PC-9 (cell line): ENCODE measurements at regions of chr20 and their contacts with region 1.

Region 1: DNA sequence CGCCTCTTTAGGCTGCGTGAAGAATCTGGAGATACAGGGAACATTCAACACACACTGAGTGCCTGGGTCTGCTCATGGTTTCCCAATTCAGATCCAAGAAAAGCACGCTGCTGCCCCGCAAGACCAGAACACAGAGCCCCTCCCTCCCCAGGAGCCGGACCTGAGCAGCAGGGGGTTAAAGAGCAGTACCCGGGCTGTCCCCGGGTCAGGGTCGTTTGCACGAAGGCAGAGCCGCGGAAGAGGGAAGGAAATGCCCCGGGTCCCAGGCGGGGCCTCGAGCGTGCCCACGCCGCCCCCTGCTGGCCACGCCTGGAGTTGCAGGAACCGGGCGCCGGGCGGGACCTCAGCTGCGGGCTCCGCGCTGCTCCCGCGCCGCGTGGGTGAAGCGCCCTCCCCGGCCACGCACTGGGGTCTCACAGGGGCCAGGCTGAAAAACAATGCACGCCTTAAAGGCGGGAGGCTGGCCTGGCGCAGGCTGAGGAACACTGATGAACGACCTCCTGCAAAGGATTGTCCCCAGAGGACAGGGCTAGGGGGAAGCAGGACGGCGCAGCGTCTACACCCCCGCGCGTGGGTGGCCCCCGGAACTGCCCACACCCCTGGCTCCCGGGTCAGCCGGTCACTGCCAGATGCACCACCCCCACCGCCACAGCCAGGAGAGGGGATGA is 48.9 kb downstream of the ANKRD60 start:
- DNase-seq: peak in 1 of 2 experiments; percentile 73
- H3K4me3 ChIP-seq: peak overlapping the region; percentile 40
- H3K27ac ChIP-seq: no peak overlapping the region
- H3K4me1 ChIP-seq: peaks cover 15% of the 10 kb centered on the region
- H3K27me3 ChIP-seq: no peaks in the 10 kb centered on the region
- CTCF ChIP-seq: peak; percentile 99

Region 2: GRCh38 chr20:57622579-57623377 is 556.8 kb before region 1 on chr20:
- CTCF ChIA-PET with region 1: interaction called, 4 read pairs
- POLR2A ChIA-PET with region 1: no interaction called
- intact Hi-C with region 1: loop called (anchors 1 kb)
- DNase-seq: peak; percentile 83 to 90
- H3K4me3 ChIP-seq: no peak overlapping the region
- H3K27ac ChIP-seq: no peak overlapping the region
- H3K4me1 ChIP-seq: peaks cover 24% of the 10 kb centered on the region
- H3K27me3 ChIP-seq: no peaks in the 10 kb centered on the region
- CTCF ChIP-seq: peak; percentile 99

Region 3: GRCh38 chr20:57797401-57797800 is 382.2 kb before region 1 on chr20:
- CTCF ChIA-PET with region 1: no interaction called
- POLR2A ChIA-PET with region 1: no interaction called
- intact Hi-C with region 1: no loop called
- DNase-seq: no peak
- H3K4me3 ChIP-seq: no peak overlapping the region
- H3K27ac ChIP-seq: no peak overlapping the region
- H3K4me1 ChIP-seq: peaks cover 10% of the 10 kb centered on the region; the same call in 1 of the 2 replicates
- H3K27me3 ChIP-seq: no peaks in the 10 kb centered on the region
- CTCF ChIP-seq: no peak

Region 4: DNA sequence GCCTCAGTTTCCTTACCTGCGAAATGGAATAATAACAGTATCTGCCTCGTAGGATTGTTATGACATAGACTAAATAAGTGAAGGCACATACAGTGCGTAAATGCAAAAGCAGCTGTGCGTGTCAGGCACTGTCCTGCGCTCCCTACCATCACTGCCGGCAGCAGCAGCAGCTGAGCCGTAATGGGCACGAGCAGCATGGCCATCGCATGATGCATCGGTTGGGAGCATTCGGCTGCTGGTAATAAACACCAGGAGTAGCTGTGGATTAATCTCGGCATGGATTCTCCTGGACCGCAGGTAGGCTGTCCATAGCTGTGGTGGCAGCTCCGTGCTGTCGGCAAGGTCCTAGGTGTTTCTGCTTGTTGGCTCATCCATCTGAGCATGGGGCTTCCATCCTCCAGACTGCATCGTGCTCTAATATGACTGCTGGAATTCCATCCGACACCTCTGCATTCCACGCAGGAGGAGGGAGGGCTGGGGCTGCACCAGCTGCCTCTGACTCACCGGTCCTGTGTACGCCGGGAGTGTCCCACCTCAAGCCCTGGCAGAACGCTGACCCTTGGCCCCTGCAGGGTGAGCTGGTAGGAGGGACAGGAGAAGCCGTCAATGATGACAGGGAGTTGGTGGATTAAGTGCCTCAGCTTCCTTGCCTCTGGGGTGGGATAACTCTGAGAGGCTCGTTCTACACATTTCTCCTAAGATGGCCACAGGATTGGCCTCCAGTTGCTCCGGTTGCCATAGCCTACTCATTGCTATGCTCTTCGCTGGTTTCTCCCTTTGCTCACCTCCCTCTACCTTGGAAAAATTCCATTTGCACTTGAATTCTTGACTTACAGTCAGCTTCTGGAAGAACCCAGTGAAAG is 368.8 kb before region 1 on chr20:
- CTCF ChIA-PET with region 1: interaction called, 3 read pairs
- POLR2A ChIA-PET with region 1: no interaction called
- intact Hi-C with region 1: loop called (anchors 10 kb)
- DNase-seq: peak; percentile 86 to 91
- H3K4me3 ChIP-seq: no peak overlapping the region
- H3K27ac ChIP-seq: peak overlapping the region; percentile 38; the same call in 1 of the 2 replicates
- H3K4me1 ChIP-seq: peaks cover 25% of the 10 kb centered on the region
- H3K27me3 ChIP-seq: no peaks in the 10 kb centered on the region
- CTCF ChIP-seq: no peak

Region 5: GRCh38 chr20:57991211-57991881 is 188.2 kb before region 1 on chr20:
- CTCF ChIA-PET with region 1: no interaction called
- POLR2A ChIA-PET with region 1: no interaction called
- intact Hi-C with region 1: loop called (anchors 2 kb)
- DNase-seq: peak; percentile 84 to 99
- H3K4me3 ChIP-seq: no peak overlapping the region
- H3K27ac ChIP-seq: peak overlapping the region; percentile 82
- H3K4me1 ChIP-seq: peaks cover 47% of the 10 kb centered on the region
- H3K27me3 ChIP-seq: no peaks in the 10 kb centered on the region
- CTCF ChIP-seq: no peak

Region 6: DNA sequence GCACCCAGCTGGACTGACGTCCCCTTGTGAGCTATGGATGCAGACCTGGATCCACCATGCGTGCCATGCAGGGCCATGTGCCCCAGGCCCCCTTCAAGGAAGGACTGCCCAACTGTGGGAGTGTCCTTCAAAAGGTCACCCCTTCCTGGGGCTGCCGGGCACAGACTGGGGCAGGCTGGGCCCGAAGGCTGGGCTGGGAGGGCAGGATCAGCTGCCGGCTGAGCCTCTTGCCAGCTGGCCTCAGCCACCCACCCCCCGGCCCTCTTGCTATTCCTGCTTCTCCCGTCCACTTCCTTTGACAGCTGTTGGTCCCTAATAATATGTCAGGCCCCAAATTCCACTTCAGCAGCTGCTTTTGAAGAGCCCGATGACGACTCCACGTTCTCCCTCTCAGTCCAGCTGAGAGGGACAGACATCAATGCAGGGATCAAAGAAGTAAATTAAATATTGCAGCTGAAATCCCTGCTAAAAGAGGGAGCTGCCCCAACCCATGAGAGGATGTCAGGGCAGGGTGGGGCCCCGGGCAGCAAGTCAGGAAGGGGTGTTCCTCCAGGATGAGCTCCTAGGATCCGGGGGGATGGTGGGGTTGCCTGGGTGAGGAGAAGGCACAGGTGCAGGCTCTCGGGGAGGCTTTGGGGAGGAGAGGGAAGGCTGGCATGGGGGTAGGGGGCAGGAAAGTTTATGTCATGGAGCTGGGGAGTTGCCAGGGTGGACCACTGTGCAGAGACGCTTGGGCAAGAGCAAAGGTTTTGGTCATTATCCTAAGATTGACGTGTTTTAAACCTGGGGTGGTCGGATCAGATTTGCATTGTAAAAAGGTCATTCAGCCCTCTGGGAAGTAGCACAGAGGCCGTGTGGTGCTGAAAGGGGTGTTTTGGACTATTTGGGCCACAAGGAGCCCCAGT is 136.1 kb before region 1 on chr20:
- CTCF ChIA-PET with region 1: interaction called, 14 read pairs
- POLR2A ChIA-PET with region 1: no interaction called
- intact Hi-C with region 1: no loop called
- DNase-seq: no peak
- H3K4me3 ChIP-seq: no peak overlapping the region
- H3K27ac ChIP-seq: no peak overlapping the region
- H3K4me1 ChIP-seq: no peaks in the 10 kb centered on the region
- H3K27me3 ChIP-seq: no peaks in the 10 kb centered on the region
- CTCF ChIP-seq: no peak

Region 7: GRCh38 chr20:58102260-58102659 is 77.3 kb before region 1 on chr20:
- CTCF ChIA-PET with region 1: no interaction called
- POLR2A ChIA-PET with region 1: no interaction called
- intact Hi-C with region 1: loop called (anchors 2 kb)
- DNase-seq: peak; percentile 69 to 72
- H3K4me3 ChIP-seq: no peak overlapping the region
- H3K27ac ChIP-seq: peak overlapping the region; percentile 20; the same call in 1 of the 2 replicates
- H3K4me1 ChIP-seq: peaks cover 23% of the 10 kb centered on the region
- H3K27me3 ChIP-seq: no peaks in the 10 kb centered on the region
- CTCF ChIP-seq: no peak

Region 8: GRCh38 chr20:58131551-58132142 is 47.9 kb before region 1 on chr20:
- CTCF ChIA-PET with region 1: interaction called, 8 read pairs
- POLR2A ChIA-PET with region 1: no interaction called
- intact Hi-C with region 1: loop called (anchors 2 kb)
- DNase-seq: peak; percentile 73 to 95
- H3K4me3 ChIP-seq: peak overlapping the region; percentile 35; the same call in 1 of the 2 replicates
- H3K27ac ChIP-seq: peak overlapping the region; percentile 87
- H3K4me1 ChIP-seq: peaks cover 97% of the 10 kb centered on the region
- H3K27me3 ChIP-seq: no peaks in the 10 kb centered on the region
- CTCF ChIP-seq: no peak

Region 9: GRCh38 chr20:58593880-58594638 is 414.5 kb after region 1 on chr20:
- CTCF ChIA-PET with region 1: no interaction called
- POLR2A ChIA-PET with region 1: no interaction called
- intact Hi-C with region 1: no loop called
- DNase-seq: no peak
- H3K4me3 ChIP-seq: no peak overlapping the region
- H3K27ac ChIP-seq: no peak overlapping the region
- H3K4me1 ChIP-seq: no peaks in the 10 kb centered on the region
- H3K27me3 ChIP-seq: 0 out of 2 replicates have a peak, but pooled peaks cover 8% of the 10 kb centered on the region
- CTCF ChIP-seq: no peak